Activated CD4-positive, alpha-beta T cell treated with anti-CD3 and anti-CD28 coated beads, Interleukin-2, amount 10 ng/mL, durations not matched to agents 24 days and 14 days (primary cell): ENCODE measurements at regions of chr5 and their contacts with region 1.

Region 1: GRCh38 chr5:43484106-43484849 is 613 bp upstream of the TMEM267 start:
- DNase-seq: peak; percentile 96
- H3K4me3 Mint-ChIP-seq: peak overlapping the region; percentile 94
- H3K27ac Mint-ChIP-seq: peak overlapping the region; percentile 100
- H3K4me1 Mint-ChIP-seq: peaks cover 23% of the 10 kb centered on the region
- H3K27me3 Mint-ChIP-seq: no peaks in the 10 kb centered on the region

Region 2: GRCh38 chr5:42908509-42909488 is 575.5 kb before region 1 on chr5:
- intact Hi-C with region 1: loop called (anchors 10 kb)
- DNase-seq: peak; percentile 96
- H3K4me3 Mint-ChIP-seq: peak overlapping the region; percentile 83
- H3K27ac Mint-ChIP-seq: peak overlapping the region; percentile 1
- H3K4me1 Mint-ChIP-seq: peaks cover 6% of the 10 kb centered on the region
- H3K27me3 Mint-ChIP-seq: peaks cover 35% of the 10 kb centered on the region

Region 3: DNA sequence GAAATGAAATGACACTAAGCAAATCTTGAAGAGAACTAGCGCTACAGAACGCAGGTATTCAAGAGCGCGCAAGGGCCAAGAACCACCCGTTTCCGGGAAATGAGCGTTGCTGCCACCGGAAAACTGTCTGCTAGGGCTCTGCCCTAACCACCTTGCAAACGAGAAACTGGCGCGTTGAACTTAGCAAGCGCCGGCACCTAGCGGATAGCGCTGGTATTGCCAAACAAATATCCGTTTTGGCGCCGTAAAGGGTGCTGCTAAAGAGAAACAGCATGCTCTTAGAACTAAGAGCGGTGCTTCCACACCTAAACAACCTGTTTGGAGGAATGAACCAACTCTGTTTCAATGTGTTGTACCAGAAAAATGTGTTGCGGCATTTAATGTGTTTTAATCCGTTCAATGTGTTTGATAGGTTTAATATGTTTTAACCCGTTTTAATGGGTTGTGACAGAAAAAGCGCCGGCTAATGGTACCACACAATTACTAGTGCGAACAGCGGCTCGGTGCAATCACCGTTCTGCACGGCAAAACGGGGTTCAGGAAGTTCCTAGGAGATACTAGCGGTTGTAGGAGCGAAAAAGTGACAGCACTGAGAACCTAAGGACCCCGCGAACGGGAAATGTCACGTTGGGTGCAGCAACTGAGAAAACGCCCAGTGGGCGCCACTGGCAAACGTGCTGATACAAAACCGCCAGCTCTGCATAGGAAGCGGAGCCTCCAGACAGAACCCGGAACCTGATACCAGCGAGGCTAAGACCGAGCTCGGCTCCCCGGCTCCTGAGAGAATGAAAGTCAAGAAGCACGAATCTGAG is 443.8 kb before region 1 on chr5 and contains the start of gene ANXA2R:
- intact Hi-C with region 1: loop called (anchors 10 kb)
- DNase-seq: peak; percentile 98
- H3K4me3 Mint-ChIP-seq: peak within 1 kb of the TSS; percentile 94
- H3K27ac Mint-ChIP-seq: peak within 1 kb of the TSS; percentile 96
- H3K4me1 Mint-ChIP-seq: peaks cover 46% of the 10 kb centered on the region
- H3K27me3 Mint-ChIP-seq: no peaks in the 10 kb centered on the region
- total RNA-seq, gene ANXA2R: 1.1 and 1.2 TPM in 2 replicates

Region 4: DNA sequence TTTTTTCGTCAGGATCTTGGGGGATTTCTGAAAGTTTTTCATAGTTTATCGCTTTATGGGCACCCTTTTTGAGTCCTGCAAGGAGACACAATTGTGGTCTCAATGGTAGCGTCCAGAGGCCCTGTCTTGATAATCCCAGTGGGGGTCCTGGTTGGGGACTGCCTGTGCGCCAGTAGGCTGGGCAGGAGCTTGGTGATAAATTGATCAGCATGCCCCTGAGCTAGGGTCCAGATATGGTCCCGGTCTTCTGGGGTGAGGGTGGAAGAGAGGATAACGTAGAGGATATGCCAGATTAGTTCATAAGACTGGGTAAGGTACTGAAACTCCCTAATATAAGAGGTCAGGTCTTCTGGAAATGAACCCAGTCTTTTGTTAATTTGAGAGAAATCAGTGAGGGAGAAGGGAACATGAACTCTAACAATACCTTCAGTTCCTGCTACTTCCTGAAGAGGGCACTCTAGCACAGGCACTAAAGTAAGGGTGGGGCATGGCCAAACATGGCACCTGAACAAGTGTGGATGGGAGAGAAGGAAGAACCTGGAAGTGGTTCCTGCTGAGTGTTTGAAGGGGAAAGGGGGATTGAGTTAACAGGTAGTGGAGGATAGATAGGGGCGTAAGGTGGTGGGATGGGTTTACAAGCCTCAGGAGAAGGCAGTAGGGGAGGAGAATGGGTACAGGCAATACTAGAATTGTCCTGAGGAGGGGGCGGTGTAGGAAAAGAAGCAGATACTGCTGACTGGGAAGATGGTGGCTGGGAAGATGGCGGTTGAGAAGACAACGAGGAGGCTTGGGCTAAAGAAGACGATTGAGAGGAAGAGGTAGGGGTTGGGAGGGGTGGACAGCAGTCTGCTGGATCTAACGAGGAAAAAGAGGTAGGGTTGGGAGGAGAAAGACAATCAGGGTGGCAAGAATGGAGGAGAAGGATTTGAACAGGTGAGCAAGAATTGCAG is 410.4 kb before region 1 on chr5:
- intact Hi-C with region 1: loop called (anchors 2 kb)
- DNase-seq: peak; percentile 89
- H3K4me3 Mint-ChIP-seq: peak overlapping the region; percentile 7
- H3K27ac Mint-ChIP-seq: peak overlapping the region; percentile 79
- H3K4me1 Mint-ChIP-seq: peaks cover 38% of the 10 kb centered on the region
- H3K27me3 Mint-ChIP-seq: no peaks in the 10 kb centered on the region

Region 5: DNA sequence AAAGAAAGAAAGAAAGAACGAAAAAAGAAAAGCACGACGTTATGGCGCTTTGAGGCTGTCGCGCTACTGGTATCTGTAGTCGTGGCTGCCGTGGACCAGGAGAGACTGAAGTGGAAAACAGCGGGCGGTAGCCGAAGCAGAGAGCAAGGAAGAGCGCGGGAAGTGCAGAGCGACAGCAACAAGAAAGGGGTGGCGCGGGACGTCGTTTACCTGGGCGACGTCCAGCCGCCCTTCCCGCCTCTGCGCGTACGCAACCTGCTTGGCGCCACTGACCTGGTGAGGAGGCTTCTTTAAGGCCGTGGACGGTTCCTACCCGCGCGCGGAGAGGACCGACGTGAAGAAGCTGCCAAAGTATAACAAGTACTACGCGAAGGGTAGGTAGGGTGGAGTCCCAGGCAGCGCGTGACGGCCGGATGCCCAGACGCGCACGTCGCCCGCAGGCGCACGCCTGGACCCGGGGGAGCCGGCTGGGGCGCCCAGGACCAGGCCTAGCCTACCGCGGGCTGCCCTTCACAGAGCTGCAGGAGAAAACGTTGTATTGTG is 87.4 kb before region 1 on chr5:
- intact Hi-C with region 1: loop called (anchors 1 kb)
- DNase-seq: peak; percentile 90
- H3K4me3 Mint-ChIP-seq: peak overlapping the region; percentile 98
- H3K27ac Mint-ChIP-seq: peak overlapping the region; percentile 96
- H3K4me1 Mint-ChIP-seq: peaks cover 13% of the 10 kb centered on the region
- H3K27me3 Mint-ChIP-seq: no peaks in the 10 kb centered on the region

Region 6: DNA sequence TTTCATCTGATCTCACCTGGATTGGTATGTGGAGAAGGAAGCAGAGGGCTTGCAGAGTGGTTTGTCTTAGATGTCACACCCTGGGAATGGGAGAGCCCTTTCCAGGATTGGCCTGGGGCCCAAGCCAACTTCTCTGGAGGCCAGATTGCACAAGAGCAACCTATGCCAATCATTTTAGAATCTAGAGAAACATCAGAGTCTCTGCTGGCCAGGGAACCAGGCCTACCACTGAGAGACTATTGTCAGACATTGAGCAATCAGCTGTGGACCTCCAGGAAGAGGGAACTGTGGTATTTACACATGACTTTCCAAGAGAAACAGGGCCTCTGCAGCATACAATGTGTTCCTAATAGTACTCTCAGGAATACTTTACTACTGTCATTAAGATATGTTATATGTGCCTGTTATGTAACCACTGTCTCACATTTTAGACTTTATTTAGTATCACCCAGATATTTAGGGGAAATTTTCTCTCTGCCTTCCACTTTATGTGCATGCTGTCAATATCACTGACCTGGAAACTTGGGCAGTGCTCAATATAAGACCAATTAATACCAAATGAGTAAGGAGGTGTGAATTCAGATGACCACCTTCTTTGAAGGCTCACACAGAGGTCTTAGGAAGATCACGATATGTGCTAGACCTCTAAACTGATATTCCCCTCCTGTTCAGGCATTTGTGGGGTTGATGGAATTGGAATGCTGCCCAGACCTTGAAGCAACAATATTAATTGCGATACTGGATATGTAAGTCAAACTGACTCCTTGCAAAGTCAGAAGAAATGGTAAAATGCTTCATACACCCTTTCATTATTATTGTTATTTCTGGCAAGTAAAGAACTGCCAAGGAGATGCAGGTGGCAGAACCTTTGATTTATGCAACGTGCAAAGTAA is 51.6 kb before region 1 on chr5:
- intact Hi-C with region 1: no loop called
- DNase-seq: no peak
- H3K4me3 Mint-ChIP-seq: no peak overlapping the region
- H3K27ac Mint-ChIP-seq: no peak overlapping the region
- H3K4me1 Mint-ChIP-seq: no peaks in the 10 kb centered on the region
- H3K27me3 Mint-ChIP-seq: no peaks in the 10 kb centered on the region

Region 7: GRCh38 chr5:43497311-43498104 is 13.2 kb after region 1 on chr5:
- intact Hi-C with region 1: no loop called
- DNase-seq: no peak
- H3K4me3 Mint-ChIP-seq: no peak overlapping the region
- H3K27ac Mint-ChIP-seq: no peak overlapping the region
- H3K4me1 Mint-ChIP-seq: peaks cover 2% of the 10 kb centered on the region
- H3K27me3 Mint-ChIP-seq: no peaks in the 10 kb centered on the region

Region 8: GRCh38 chr5:43556857-43557542 is 72.7 kb after region 1 on chr5 and contains the start of gene PAIP1:
- intact Hi-C with region 1: loop called (anchors 1 kb)
- DNase-seq: peak; percentile 96
- H3K4me3 Mint-ChIP-seq: peak within 1 kb of the TSS; percentile 91
- H3K27ac Mint-ChIP-seq: peak within 1 kb of the TSS; percentile 90
- H3K4me1 Mint-ChIP-seq: peaks cover 12% of the 10 kb centered on the region
- H3K27me3 Mint-ChIP-seq: peaks cover 13% of the 10 kb centered on the region
- total RNA-seq, gene PAIP1: 60.2 and 64.1 TPM in 2 replicates